ENCODE measurements at regions of chr4 and their contacts with region 1.

Region 1: DNA sequence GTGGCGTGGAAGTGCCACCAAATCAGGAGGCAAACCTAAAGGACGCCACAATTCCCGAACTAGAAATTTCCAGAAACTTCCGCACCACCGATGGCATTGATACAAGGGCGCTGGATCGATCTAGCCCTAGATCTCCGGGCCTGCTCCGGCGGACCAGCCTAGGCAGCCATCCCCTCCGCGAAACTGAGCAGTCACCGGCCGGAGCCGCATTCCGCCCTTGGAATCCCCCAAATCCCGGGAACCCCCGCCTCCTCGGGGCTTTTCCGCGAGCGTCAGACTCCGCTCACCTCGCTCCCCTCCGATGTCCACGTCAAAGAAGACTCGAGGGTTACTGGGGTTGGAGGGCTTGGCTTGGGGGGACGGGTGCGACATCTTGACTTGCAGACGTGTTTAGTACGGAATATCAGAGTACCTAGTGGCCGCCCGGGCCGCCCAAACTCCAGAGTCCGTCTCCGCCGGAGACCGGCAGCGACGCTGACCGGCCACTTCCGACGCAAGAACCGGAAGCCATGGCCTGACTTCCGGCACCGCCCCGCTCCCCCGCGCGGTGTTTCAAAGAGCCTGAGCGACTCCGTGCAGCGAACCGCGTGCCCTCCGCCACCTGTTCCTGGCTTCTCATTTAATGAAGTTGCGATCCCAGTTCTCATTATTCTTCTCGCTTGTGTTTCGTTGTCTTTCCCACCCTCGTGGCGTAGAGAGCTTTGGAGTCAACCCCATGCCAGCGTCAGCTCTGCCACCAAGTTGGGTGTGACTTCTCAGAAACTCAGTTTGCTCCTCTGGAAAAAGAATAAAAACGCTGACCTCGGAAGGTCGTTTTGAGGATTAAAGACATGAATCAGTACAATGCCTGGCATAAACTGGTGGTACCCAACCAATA is at the start of gene PPID:
- DNase-seq: peak; percentile 75 to 96
- H3K4me3 ChIP-seq: peak within 1 kb of the TSS; percentile 95
- CTCF ChIP-seq: no peak
- POLR2A ChIP-seq: no peak
- total RNA-seq, gene PPID: 10.6 to 24.1 (median 17.9) TPM

Region 2: GRCh38 chr4:159006202-159006601 is 283.0 kb after region 1 on chr4:
- intact Hi-C with region 1: no loop called
- DNase-seq: no peak
- H3K4me3 ChIP-seq: no peak overlapping the region
- CTCF ChIP-seq: no peak
- POLR2A ChIP-seq: no peak

Region 3: DNA sequence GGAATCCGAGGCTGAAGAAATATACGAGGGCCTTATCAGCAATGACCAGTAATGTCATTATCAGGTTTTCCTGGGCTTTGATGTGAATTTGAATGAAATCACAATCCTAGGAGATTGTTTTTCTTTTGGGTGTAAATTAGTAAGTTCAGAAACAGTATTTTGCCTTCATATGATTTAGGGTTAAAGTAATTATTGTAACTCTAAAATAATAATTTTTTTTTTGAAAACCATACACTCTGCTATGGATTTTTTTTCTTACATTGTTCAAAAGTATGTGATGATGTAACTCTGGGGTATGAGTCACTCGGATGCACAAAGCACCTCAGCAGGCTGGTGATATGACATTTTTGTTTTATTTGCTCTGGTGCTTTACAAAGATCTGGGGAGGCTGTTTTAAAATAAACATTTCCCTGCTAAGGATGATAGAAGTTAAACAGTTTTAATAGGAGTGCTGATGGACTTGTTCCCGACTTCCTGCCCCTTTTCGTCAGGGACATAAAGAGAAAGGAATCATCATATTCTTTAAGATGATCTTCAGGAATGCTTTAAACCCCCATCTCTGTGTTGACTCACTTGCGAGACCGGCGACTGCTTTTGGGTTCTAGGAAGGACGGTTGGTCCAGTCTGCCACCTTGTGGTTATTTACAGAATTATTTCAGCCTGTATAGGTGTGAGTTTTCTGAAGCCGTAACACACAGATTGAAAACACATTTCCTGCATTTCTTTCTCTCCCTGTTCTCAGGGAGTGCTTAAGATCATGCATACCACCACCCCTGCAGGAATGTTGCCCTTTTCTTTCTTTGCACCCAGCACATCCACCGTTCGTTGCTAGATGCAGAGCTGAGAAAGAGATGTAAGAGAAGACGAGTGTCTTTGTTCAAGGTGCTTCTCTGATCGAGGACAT is 452.2 kb after region 1 on chr4:
- intact Hi-C with region 1: loop called (anchors 10 kb)
- DNase-seq: peak; percentile 62 to 88
- H3K4me3 ChIP-seq: no peak overlapping the region
- CTCF ChIP-seq: peak in 1 of 3 donors; percentile 76
- POLR2A ChIP-seq: no peak

Measured in lower leg skin (tissue), 4 donors.